ENCODE measurements at regions of chr19 and their contacts with region 1.

Region 1: DNA sequence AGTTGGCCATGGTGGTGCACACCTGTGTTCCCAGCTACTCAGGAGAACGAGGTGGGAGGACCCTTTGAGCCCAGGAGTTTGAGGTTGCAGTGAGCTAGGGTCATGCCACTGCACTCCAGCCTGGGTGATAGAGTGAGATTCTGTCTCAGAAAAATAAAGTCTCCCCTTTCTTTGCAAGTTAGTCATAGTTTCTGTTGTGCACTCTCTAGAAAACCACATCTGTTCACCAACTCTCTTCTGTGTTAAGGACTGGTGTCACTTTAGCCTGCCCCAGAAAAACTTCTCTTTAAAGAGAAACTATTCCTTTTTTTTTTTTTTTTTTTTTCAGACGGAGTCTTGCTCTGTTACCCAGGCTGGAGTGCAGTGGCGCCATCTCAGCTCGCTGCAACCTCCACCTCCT is 4.9 kb upstream of the CHST8 start:
- DNase-seq: no peak
- ATAC-seq: no peak
- H3K4me3 Mint-ChIP-seq: no peak overlapping the region
- H3K27ac Mint-ChIP-seq: no peak overlapping the region
- H3K4me1 Mint-ChIP-seq: peaks cover 12% of the 10 kb centered on the region; the same call in 1 of the 2 replicates
- H3K27me3 Mint-ChIP-seq: peaks cover 42% of the 10 kb centered on the region
- CTCF ChIP-seq: no peak

Region 2: GRCh38 chr19:33447336-33448158 is 169.3 kb before region 1 on chr19:
- CTCF ChIA-PET with region 1: no interaction called
- POLR2A ChIA-PET with region 1: no interaction called
- DNase-seq: peak; percentile 8
- ATAC-seq: no peak
- H3K4me3 Mint-ChIP-seq: no peak overlapping the region
- H3K27ac Mint-ChIP-seq: no peak overlapping the region
- H3K4me1 Mint-ChIP-seq: no peaks in the 10 kb centered on the region
- H3K27me3 Mint-ChIP-seq: no peaks in the 10 kb centered on the region
- CTCF ChIP-seq: no peak

Region 3: GRCh38 chr19:33512580-33513137 is 104.2 kb before region 1 on chr19:
- CTCF ChIA-PET with region 1: no interaction called
- POLR2A ChIA-PET with region 1: interaction called, 10 read pairs
- DNase-seq: no peak
- ATAC-seq: no peak
- H3K4me3 Mint-ChIP-seq: no peak overlapping the region
- H3K27ac Mint-ChIP-seq: no peak overlapping the region
- H3K4me1 Mint-ChIP-seq: peaks cover 27% of the 10 kb centered on the region
- H3K27me3 Mint-ChIP-seq: no peaks in the 10 kb centered on the region
- CTCF ChIP-seq: no peak

Region 4: GRCh38 chr19:33587150-33587549 is 29.7 kb before region 1 on chr19:
- CTCF ChIA-PET with region 1: no interaction called
- POLR2A ChIA-PET with region 1: no interaction called
- DNase-seq: no peak
- ATAC-seq: no peak
- H3K4me3 Mint-ChIP-seq: no peak overlapping the region
- H3K27ac Mint-ChIP-seq: no peak overlapping the region
- H3K4me1 Mint-ChIP-seq: peaks cover 6% of the 10 kb centered on the region; the same call in 1 of the 2 replicates
- H3K27me3 Mint-ChIP-seq: peaks cover 9% of the 10 kb centered on the region; the same call in 1 of the 2 replicates
- CTCF ChIP-seq: no peak

Region 5: DNA sequence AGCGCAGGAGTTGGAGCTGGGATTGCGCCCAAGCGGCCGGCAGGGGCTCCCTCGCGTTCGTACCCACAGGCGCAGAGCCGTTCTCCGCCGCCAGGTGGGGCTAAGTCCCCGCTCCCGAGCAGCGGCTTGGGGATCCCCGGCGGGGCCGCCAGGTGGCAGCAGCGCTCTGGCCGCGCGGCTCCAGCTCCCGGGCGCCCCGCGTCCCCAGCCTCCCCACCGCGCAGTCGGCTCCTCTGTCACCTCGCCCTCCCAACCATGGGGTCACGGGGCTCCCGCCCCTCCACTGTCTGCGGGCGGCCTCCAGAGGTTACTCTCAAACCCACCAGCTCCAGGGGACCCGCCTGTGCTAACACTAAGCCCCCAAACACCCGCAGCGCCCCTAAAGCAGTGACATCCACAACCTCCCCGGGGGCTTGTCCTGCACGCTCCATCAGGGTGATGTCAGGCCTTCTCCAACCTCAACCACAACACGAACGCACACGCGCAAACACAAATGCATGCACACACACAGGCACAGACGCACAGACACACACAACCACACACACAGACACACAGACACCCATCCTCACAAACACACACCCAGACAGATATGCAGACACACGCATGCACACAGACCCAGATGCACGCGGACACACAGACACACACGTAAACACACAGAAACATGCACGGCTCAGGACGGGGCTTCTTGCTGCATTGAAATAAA is 161.4 kb after region 1 on chr19:
- CTCF ChIA-PET with region 1: no interaction called
- POLR2A ChIA-PET with region 1: no interaction called
- DNase-seq: peak; percentile 85
- ATAC-seq: peak; percentile 82
- H3K4me3 Mint-ChIP-seq: peak overlapping the region; percentile 51
- H3K27ac Mint-ChIP-seq: no peak overlapping the region
- H3K4me1 Mint-ChIP-seq: peaks cover 16% of the 10 kb centered on the region
- H3K27me3 Mint-ChIP-seq: peaks cover 12% of the 10 kb centered on the region
- CTCF ChIP-seq: peak; percentile 100

Measured in WTC11 (cell line).